Activated CD8-positive, alpha-beta memory T cell treated with anti-CD3 and anti-CD28 coated beads, Interleukin-2, amount 10 ng/mL, durations not matched to agents 7 days and 5 days (primary cell): ENCODE measurements at regions of chr2 and their contacts with region 1.

Region 1: DNA sequence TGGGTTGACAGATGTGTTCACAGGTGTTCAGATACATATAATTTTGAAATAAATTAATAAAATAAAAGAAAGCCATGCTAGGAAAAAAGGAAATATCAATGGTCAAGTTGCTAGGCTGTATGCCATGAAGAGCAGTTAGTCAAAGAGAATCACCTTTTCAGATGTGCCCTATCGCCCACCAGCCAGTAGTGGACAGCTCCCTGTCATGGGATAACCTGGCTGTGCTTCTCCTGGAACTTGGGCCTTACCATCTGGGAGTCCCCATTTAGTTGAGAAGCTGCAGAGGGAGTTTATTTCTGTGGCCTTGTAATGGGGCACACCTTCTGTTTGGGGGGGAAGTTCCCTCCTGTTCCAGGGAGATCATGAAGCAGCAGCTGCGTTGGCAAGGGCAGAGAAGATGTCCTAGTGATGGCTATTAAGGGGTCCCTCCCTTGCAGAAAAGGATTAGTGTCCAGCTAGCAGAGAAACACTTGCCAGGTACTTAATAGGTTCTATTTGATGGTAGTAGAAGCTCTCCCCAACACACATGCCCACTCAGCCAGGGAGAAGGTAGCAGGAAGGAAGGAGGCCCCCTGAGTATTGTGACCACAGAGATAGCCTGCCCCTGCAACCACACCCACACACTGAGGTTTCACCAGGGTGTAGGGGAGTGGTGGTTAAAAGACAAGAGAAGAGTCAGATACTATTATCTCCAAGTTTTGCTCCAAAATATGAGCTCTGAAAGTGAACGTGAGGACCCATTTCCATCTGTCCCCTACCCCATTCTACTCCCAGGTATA is 117.7 kb downstream of the B3GNT2 start:
- DNase-seq: peak; percentile 92
- ATAC-seq: peak; percentile 83
- H3K4me3 Mint-ChIP-seq: peak overlapping the region; percentile 59
- H3K27ac Mint-ChIP-seq: peak overlapping the region; percentile 90
- H3K4me1 Mint-ChIP-seq: peaks cover 54% of the 10 kb centered on the region
- H3K27me3 Mint-ChIP-seq: no peaks in the 10 kb centered on the region

Region 2: GRCh38 chr2:62175728-62176127 is 137.9 kb before region 1 on chr2:
- CTCF ChIA-PET with region 1: no interaction called
- DNase-seq: no peak
- ATAC-seq: no peak
- H3K4me3 Mint-ChIP-seq: no peak overlapping the region
- H3K27ac Mint-ChIP-seq: no peak overlapping the region
- H3K4me1 Mint-ChIP-seq: no peaks in the 10 kb centered on the region
- H3K27me3 Mint-ChIP-seq: no peaks in the 10 kb centered on the region

Region 3: GRCh38 chr2:62234755-62235655 is 78.6 kb before region 1 on chr2:
- CTCF ChIA-PET with region 1: no interaction called
- DNase-seq: no peak
- ATAC-seq: no peak
- H3K4me3 Mint-ChIP-seq: no peak overlapping the region
- H3K27ac Mint-ChIP-seq: no peak overlapping the region
- H3K4me1 Mint-ChIP-seq: peaks cover 4% of the 10 kb centered on the region
- H3K27me3 Mint-ChIP-seq: no peaks in the 10 kb centered on the region

Region 4: GRCh38 chr2:62287899-62288880 is 25.4 kb before region 1 on chr2:
- CTCF ChIA-PET with region 1: no interaction called
- DNase-seq: peak; percentile 66
- ATAC-seq: peak; percentile 51
- H3K4me3 Mint-ChIP-seq: no peak overlapping the region
- H3K27ac Mint-ChIP-seq: no peak overlapping the region
- H3K4me1 Mint-ChIP-seq: peaks cover 10% of the 10 kb centered on the region
- H3K27me3 Mint-ChIP-seq: no peaks in the 10 kb centered on the region

Region 5: GRCh38 chr2:62330959-62331358 is 17.3 kb after region 1 on chr2:
- CTCF ChIA-PET with region 1: interaction called, 13 read pairs
- DNase-seq: no peak
- ATAC-seq: no peak
- H3K4me3 Mint-ChIP-seq: no peak overlapping the region
- H3K27ac Mint-ChIP-seq: no peak overlapping the region
- H3K4me1 Mint-ChIP-seq: peaks cover 50% of the 10 kb centered on the region
- H3K27me3 Mint-ChIP-seq: no peaks in the 10 kb centered on the region